CD8-positive, alpha-beta T cell (primary cell): ENCODE measurements at regions of chr11 and their contacts with region 1.

Region 1: GRCh38 chr11:57249384-57250319 is 12.6 kb upstream of the APLNR start:
- DNase-seq: peak in 6 of 9 experiments; percentile 9 to 50 (median 40)
- ATAC-seq: no peak
- H3K4me3 ChIP-seq: no peak overlapping the region
- H3K4me3 Mint-ChIP-seq: no peak overlapping the region
- H3K27ac ChIP-seq: no peak overlapping the region
- H3K27ac Mint-ChIP-seq: no peak overlapping the region
- H3K4me1 ChIP-seq: no peaks in the 10 kb centered on the region
- H3K4me1 Mint-ChIP-seq: peaks cover 5% of the 10 kb centered on the region
- H3K27me3 ChIP-seq: peaks cover 0 to under 1% of the 10 kb centered on the region in 2 experiments
- H3K27me3 Mint-ChIP-seq: peaks cover 42% of the 10 kb centered on the region
- CTCF ChIP-seq: peak; percentile 85

Region 2: GRCh38 chr11:56841210-56841810 is 408.3 kb before region 1 on chr11:
- CTCF ChIA-PET with region 1: interaction called, 31 read pairs
- POLR2A ChIA-PET with region 1: no interaction called
- intact Hi-C with region 1: loop called in 1 of 2 experiments (anchors 1 kb)
- DNase-seq: peak in 3 of 9 experiments; percentile 18 to 39 (median 18)
- ATAC-seq: no peak
- H3K4me3 ChIP-seq: no peak overlapping the region
- H3K4me3 Mint-ChIP-seq: no peak overlapping the region
- H3K27ac ChIP-seq: no peak overlapping the region
- H3K27ac Mint-ChIP-seq: no peak overlapping the region
- H3K4me1 ChIP-seq: no peaks in the 10 kb centered on the region
- H3K4me1 Mint-ChIP-seq: no peaks in the 10 kb centered on the region
- H3K27me3 ChIP-seq: no peaks in the 10 kb centered on the region
- H3K27me3 Mint-ChIP-seq: peaks cover 5% of the 10 kb centered on the region
- CTCF ChIP-seq: peak; percentile 25

Region 3: GRCh38 chr11:57116654-57117053 is 133.0 kb before region 1 on chr11:
- CTCF ChIA-PET with region 1: interaction called, 3 read pairs
- POLR2A ChIA-PET with region 1: no interaction called
- intact Hi-C with region 1: loop called in 1 of 2 experiments (anchors 2 kb)
- DNase-seq: peak in 1 of 9 experiments; percentile 10
- ATAC-seq: no peak
- H3K4me3 ChIP-seq: no peak overlapping the region
- H3K4me3 Mint-ChIP-seq: no peak overlapping the region
- H3K27ac ChIP-seq: no peak overlapping the region
- H3K27ac Mint-ChIP-seq: no peak overlapping the region
- H3K4me1 ChIP-seq: no peaks in the 10 kb centered on the region
- H3K4me1 Mint-ChIP-seq: no peaks in the 10 kb centered on the region
- H3K27me3 ChIP-seq: no peaks in the 10 kb centered on the region
- H3K27me3 Mint-ChIP-seq: peaks cover 7% of the 10 kb centered on the region
- CTCF ChIP-seq: no peak

Region 4: DNA sequence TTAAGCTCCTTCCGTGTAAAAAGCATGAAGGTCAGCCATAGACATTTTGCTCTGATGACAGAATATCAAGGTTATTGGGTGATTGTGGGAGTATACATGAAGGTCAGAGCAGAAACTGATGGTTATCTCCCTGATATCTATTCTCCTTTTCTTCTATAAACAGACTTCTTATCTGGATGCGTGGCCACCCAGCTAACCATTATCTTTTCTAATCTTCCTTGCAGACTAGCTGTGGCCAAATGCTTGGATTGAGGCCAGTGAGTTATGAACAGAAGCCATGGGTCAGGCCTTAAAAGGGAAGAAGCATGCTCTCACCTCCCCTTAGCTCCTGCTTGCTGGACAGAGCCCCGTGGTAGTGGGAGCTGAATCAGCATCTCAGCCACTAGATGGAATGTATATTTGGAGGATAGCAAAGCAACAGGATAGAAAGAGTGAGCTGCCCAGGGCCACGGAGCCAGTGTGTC is 99.2 kb before region 1 on chr11:
- CTCF ChIA-PET with region 1: no interaction called
- POLR2A ChIA-PET with region 1: no interaction called
- intact Hi-C with region 1: no loop called
- DNase-seq: no peak
- ATAC-seq: no peak
- H3K4me3 ChIP-seq: no peak overlapping the region
- H3K4me3 Mint-ChIP-seq: no peak overlapping the region
- H3K27ac ChIP-seq: no peak overlapping the region
- H3K27ac Mint-ChIP-seq: no peak overlapping the region
- H3K4me1 ChIP-seq: no peaks in the 10 kb centered on the region
- H3K4me1 Mint-ChIP-seq: no peaks in the 10 kb centered on the region
- H3K27me3 ChIP-seq: peaks cover 0 to 3% of the 10 kb centered on the region in 2 experiments
- H3K27me3 Mint-ChIP-seq: peaks cover 19% of the 10 kb centered on the region
- CTCF ChIP-seq: no peak

Region 5: DNA sequence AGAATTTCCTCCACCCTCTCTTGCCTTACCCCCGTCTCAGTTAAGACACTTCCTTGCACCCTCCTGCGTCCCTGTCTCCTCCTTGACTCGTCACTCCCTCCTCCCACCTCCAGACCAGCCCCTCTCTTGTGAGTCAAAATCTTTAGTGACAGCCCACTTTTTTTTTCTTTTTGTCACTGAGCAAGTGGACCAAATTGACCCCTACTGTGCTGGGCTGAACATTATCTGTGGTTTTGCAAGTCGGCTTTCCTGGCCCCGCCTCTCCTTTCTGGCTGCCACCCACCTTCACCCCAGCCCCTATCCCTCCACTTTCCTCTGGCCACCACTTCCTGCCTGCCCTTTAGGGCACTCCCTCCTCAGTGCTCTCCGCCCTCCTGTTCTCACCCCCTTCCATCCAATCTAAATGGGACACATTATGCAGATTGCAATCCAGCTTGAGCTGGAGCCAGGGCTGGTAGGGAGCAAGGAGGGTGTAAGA is 12.4 kb before region 1 on chr11 and contains the start of gene APLNR:
- CTCF ChIA-PET with region 1: interaction called, 42 read pairs
- POLR2A ChIA-PET with region 1: no interaction called
- intact Hi-C with region 1: no loop called
- DNase-seq: no peak
- ATAC-seq: no peak
- H3K4me3 ChIP-seq: no peak within 1 kb of the TSS
- H3K4me3 Mint-ChIP-seq: no peak within 1 kb of the TSS
- H3K27ac ChIP-seq: no peak within 1 kb of the TSS
- H3K27ac Mint-ChIP-seq: no peak within 1 kb of the TSS
- H3K4me1 ChIP-seq: no peaks in the 10 kb centered on the region
- H3K4me1 Mint-ChIP-seq: peaks cover 9% of the 10 kb centered on the region
- H3K27me3 ChIP-seq: peaks cover 0 to under 1% of the 10 kb centered on the region in 2 experiments
- H3K27me3 Mint-ChIP-seq: peaks cover 62% of the 10 kb centered on the region
- CTCF ChIP-seq: no peak
- total RNA-seq, gene APLNR: not detected

Region 6: GRCh38 chr11:57288771-57289579 is 39.3 kb after region 1 on chr11:
- CTCF ChIA-PET with region 1: no interaction called
- POLR2A ChIA-PET with region 1: no interaction called
- intact Hi-C with region 1: no loop called
- DNase-seq: no peak
- ATAC-seq: no peak
- H3K4me3 ChIP-seq: no peak overlapping the region
- H3K4me3 Mint-ChIP-seq: no peak overlapping the region
- H3K27ac ChIP-seq: no peak overlapping the region
- H3K27ac Mint-ChIP-seq: no peak overlapping the region
- H3K4me1 ChIP-seq: no peaks in the 10 kb centered on the region
- H3K4me1 Mint-ChIP-seq: no peaks in the 10 kb centered on the region
- H3K27me3 ChIP-seq: peaks cover 0 to 3% of the 10 kb centered on the region in 2 experiments
- H3K27me3 Mint-ChIP-seq: peaks cover 17% of the 10 kb centered on the region
- CTCF ChIP-seq: no peak